AG04450 (cell line): ENCODE measurements at regions of chr10 and their contacts with region 1.

Region 1: GRCh38 chr10:112985690-112986543 is 35.9 kb downstream of the TCF7L2 start:
- DNase-seq: peak; percentile 21
- H3K4me3 ChIP-seq: no peak overlapping the region
- H3K27ac ChIP-seq: peak overlapping the region; percentile 79
- H3K27me3 ChIP-seq: no peaks in the 10 kb centered on the region
- CTCF ChIP-seq: no peak

Region 2: GRCh38 chr10:112859763-112860162 is 126.2 kb before region 1 on chr10:
- CTCF ChIA-PET with region 1: no interaction called
- POLR2A ChIA-PET with region 1: no interaction called
- DNase-seq: no peak
- H3K4me3 ChIP-seq: no peak overlapping the region
- H3K27ac ChIP-seq: no peak overlapping the region
- H3K27me3 ChIP-seq: peaks cover 9% of the 10 kb centered on the region
- CTCF ChIP-seq: no peak

Region 3: DNA sequence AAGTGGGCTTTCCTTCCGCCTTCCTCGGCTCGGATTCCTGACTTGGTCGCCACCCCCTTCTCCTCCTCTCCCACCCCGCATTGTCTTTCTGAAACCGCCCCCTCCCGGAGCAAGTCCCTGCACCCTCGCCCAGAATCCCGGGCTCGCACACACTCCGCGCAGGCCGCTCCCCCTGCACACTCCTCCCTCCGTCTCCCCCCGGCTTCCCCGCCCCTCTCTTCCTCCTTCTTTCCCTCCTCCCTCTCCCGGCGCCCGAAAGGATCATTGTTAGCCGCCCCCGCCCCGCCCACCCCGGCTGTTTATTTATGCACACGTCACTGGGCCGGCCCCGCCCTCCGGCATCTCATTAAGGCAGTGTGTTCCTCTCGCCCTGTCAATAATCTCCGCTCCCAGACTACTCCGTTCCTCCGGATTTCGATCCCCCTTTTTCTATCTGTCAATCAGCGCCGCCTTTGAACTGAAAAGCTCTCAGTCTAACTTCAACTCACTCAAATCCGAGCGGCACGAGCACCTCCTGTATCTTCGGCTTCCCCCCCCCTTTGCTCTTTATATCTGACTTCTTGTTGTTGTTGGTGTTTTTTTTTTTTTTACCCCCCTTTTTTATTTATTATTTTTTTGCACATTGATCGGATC is 35.9 kb before region 1 on chr10 and contains the start of gene TCF7L2:
- CTCF ChIA-PET with region 1: no interaction called
- POLR2A ChIA-PET with region 1: interaction called, 12 read pairs
- DNase-seq: peak; percentile 89
- H3K4me3 ChIP-seq: peak within 1 kb of the TSS; percentile 60
- H3K27ac ChIP-seq: peak within 1 kb of the TSS; percentile 77
- H3K27me3 ChIP-seq: no peaks in the 10 kb centered on the region
- CTCF ChIP-seq: no peak
- polyA plus RNA-seq, gene TCF7L2: 6.3 and 7.7 TPM in 2 replicates

Region 4: GRCh38 chr10:113463777-113464176 is 477.9 kb after region 1 on chr10:
- CTCF ChIA-PET with region 1: no interaction called
- POLR2A ChIA-PET with region 1: no interaction called
- DNase-seq: no peak
- H3K4me3 ChIP-seq: no peak overlapping the region
- H3K27ac ChIP-seq: no peak overlapping the region
- H3K27me3 ChIP-seq: peaks cover 7% of the 10 kb centered on the region
- CTCF ChIP-seq: no peak